CD8-positive, alpha-beta T cell (primary cell): ENCODE measurements at regions of chr3 and their contacts with region 1.

Region 1: DNA sequence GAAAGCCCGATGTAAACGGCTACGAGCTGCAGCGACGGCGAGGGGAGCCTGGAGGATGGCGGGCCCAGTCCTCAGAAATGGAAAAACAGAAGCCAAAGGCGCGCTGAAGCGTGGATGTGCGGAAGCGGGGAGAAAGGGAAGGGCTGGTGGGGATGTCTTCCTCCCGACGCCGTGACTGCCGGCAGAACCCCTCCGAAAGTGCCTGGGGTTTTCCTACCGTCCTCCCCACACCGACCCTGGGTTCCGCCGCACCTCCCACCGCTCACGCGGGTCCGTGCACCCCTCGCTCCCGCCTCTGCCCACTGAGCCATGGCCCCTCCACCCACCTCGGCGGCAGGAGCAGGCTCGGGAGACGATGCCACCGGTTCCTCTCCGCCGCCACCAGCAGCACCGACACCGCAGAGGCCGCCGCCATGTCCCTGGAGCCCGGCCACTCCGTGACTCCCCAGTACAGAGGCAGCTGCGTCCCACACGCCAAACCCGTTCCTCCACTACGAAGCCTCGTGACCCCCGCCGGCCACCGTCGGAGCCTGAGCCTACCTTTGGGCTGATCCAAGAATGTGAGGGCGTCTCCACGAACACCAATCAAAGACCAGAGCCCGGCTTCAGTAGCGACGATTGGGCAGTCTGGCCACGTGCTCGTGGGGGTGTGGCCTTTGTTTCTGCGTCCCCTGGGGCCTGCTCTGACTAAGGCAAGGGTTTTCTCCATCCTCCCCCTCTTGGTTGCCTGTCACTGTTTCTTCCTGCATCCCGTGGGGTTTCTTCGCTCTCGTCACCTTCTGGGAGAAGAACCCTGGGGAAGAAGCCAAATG is at the start of gene MCCC1:
- DNase-seq: peak; percentile 93 to 99 (median 97)
- ATAC-seq: peak; percentile 97
- H3K4me3 ChIP-seq: peak within 1 kb of the TSS; percentile 85 to 86
- H3K4me3 Mint-ChIP-seq: peak within 1 kb of the TSS; percentile 98
- H3K27ac ChIP-seq: peak within 1 kb of the TSS; percentile 72 to 76
- H3K27ac Mint-ChIP-seq: peak within 1 kb of the TSS; percentile 98
- H3K4me1 ChIP-seq: peaks cover 24% of the 10 kb centered on the region
- H3K4me1 Mint-ChIP-seq: peaks cover 43% of the 10 kb centered on the region
- H3K27me3 ChIP-seq: no peaks in the 10 kb centered on the region
- H3K27me3 Mint-ChIP-seq: no peaks in the 10 kb centered on the region
- CTCF ChIP-seq: no peak
- total RNA-seq, gene MCCC1: 12.8 to 25.9 TPM

Region 2: DNA sequence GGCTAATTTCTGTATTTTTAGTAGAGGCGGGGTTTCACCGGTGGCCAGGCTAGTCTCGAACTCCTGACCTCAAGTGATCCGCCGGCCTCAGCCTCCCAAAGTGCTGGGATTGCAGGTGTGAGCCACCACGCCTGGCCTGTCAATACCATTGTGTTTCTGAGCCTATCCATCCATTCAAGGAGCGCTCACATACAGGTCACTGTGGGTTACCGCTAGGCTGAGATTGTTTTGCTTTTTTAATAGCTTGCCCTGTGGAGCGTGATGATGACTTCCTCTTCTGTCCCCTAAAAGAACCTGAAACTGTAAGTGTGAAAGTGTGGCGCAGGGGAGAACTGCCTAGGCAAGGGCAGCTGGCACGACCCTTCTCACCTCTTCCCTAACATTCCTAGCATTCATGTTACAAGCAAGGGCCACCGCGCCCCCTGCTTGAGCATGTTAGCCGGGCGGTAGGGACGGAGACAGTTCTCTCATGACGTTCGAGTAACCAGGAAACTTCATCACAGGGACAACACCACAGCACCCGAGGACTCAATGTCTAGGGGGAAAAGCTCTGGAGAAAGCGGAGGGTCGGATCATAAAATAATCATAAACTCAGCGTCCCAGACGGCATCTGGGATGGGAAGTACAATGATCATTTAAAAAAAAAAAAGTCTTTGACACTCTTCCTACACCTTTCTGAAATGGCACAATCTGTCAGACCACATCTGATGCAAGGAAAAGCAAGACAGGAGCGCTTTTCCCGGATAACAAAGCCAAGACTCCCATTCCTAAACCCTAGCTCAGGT is 62.5 kb after region 1 on chr3:
- CTCF ChIA-PET with region 1: interaction called, 4 read pairs
- POLR2A ChIA-PET with region 1: interaction called, 3 read pairs
- intact Hi-C with region 1: loop called (anchors 1 kb)
- DNase-seq: peak in 2 of 9 experiments; percentile 29 to 52
- ATAC-seq: no peak
- H3K4me3 ChIP-seq: peak overlapping the region; percentile 57 to 87
- H3K4me3 Mint-ChIP-seq: peak overlapping the region; percentile 84
- H3K27ac ChIP-seq: peak overlapping the region in 1 of 2 experiments; percentile 43
- H3K27ac Mint-ChIP-seq: peak overlapping the region; percentile 42
- H3K4me1 ChIP-seq: peaks cover 12% of the 10 kb centered on the region
- H3K4me1 Mint-ChIP-seq: peaks cover 9% of the 10 kb centered on the region
- H3K27me3 ChIP-seq: no peaks in the 10 kb centered on the region
- H3K27me3 Mint-ChIP-seq: no peaks in the 10 kb centered on the region
- CTCF ChIP-seq: no peak